Heart right ventricle (tissue), 16 donors: ENCODE measurements at regions of chr10 and their contacts with region 1.

Region 1: GRCh38 chr10:86979977-86980795 is 11.9 kb downstream of the ADIRF start:
- DNase-seq: peak; percentile 50 to 57
- ATAC-seq: peak; percentile 78 to 95 (median 90)
- H3K4me3 ChIP-seq: peak overlapping the region in 3 of 10 donors; percentile 1 to 13 (median 6)
- H3K27ac ChIP-seq: peak overlapping the region; percentile 61 to 84 (median 76)
- H3K4me1 ChIP-seq: peaks cover 8 to 38% (median 17%) of the 10 kb centered on the region in 9 donors
- H3K27me3 ChIP-seq: no peaks in the 10 kb centered on the region
- CTCF ChIP-seq: no peak

Region 2: GRCh38 chr10:86918022-86918471 is 62.1 kb before region 1 on chr10:
- intact Hi-C with region 1: no loop called
- DNase-seq: no peak
- ATAC-seq: peak in 6 of 8 donors; percentile 41 to 84 (median 67)
- H3K4me3 ChIP-seq: no peak overlapping the region
- H3K27ac ChIP-seq: peak overlapping the region in 2 of 10 donors; percentile 25 to 45
- H3K4me1 ChIP-seq: peaks cover 0 to 9% (median 0%) of the 10 kb centered on the region in 9 donors
- H3K27me3 ChIP-seq: no peaks in the 10 kb centered on the region
- CTCF ChIP-seq: no peak

Region 3: DNA sequence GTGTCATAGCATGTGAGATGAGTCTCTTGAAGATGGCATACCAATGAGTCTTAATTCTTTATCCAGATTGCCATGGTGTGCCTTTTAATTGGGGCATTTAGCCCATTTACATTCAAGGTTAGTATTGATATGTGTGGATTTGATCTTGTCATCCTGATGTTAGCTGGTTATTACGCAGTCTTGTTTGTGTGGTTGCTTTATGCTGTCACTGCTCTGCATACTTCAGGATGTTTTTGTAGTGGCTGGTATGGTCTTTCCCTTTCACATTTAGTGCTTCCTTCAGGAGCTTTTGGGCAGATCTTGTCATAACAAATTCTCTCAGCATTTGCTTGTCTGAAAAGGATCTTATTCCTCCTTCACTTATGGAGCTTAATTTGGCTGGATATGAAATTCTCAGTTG is 56.4 kb after region 1 on chr10:
- intact Hi-C with region 1: no loop called
- DNase-seq: no peak
- ATAC-seq: no peak
- H3K4me3 ChIP-seq: no peak overlapping the region
- H3K27ac ChIP-seq: no peak overlapping the region
- H3K4me1 ChIP-seq: no peaks in the 10 kb centered on the region
- H3K27me3 ChIP-seq: no peaks in the 10 kb centered on the region
- CTCF ChIP-seq: no peak

Region 4: GRCh38 chr10:87054373-87055295 is 74.4 kb after region 1 on chr10:
- intact Hi-C with region 1: loop called in 1 of 10 experiments (anchors 10 kb)
- DNase-seq: no peak
- ATAC-seq: peak in 7 of 8 donors; percentile 18 to 72 (median 55)
- H3K4me3 ChIP-seq: peak overlapping the region in 1 of 10 donors; percentile 8
- H3K27ac ChIP-seq: peak overlapping the region in 2 of 10 donors; percentile 24 to 69
- H3K4me1 ChIP-seq: peaks cover 0 to 32% (median 14%) of the 10 kb centered on the region in 9 donors
- H3K27me3 ChIP-seq: no peaks in the 10 kb centered on the region
- CTCF ChIP-seq: peak in 1 of 9 donors; percentile 22

Region 5: DNA sequence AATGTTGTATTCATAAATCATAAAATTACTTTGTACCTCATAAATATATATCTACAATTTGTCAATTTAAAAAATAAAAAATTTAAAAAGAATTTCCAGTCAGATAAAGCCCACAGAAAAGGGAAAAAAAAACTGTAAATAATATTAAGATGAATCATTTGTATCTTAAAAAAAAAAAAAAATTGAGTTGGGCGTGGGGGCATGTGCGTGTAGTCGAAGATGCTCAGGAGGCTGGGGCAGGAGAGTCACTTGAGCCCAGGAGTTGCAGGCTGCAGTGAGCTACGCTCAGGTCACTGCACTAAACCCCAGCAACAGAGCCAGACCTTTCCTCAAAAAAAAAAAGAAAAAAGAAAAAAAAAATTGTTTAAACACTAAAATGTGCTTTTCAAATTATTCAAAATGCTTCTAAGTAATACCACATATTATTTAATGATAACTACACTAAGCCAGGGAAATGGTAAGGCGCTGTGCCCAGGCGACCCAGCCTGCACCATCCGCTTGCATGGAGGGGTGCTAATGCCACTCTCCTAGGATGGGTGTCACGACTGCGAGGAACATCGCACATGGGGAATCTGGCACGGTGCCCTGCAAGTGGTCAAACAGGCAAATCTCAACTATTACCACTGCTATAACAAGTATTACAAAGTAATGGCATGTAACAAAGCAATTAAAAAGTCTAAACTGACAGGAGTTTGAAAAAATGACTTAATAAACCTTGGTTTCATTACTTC is 99.1 kb after region 1 on chr10:
- intact Hi-C with region 1: no loop called
- DNase-seq: no peak
- ATAC-seq: peak in 1 of 8 donors; percentile 42
- H3K4me3 ChIP-seq: no peak overlapping the region
- H3K27ac ChIP-seq: no peak overlapping the region
- H3K4me1 ChIP-seq: peaks cover 3 to 27% (median 12%) of the 10 kb centered on the region in 9 donors
- H3K27me3 ChIP-seq: no peaks in the 10 kb centered on the region
- CTCF ChIP-seq: no peak